HepG2 (cell line): ENCODE measurements at regions of chrX and their contacts with region 1.

Region 1: GRCh38 chrX:147476008-147476407 is 435.7 kb upstream of the FMR1 start:
- DNase-seq: peak; percentile 4
- ATAC-seq: peak; percentile 59; the same call in 2 of the 3 replicates
- H3K4me3 ChIP-seq: no peak overlapping the region
- H3K27ac ChIP-seq: no peak overlapping the region
- H3K4me1 ChIP-seq: no peaks in the 10 kb centered on the region
- H3K27me3 ChIP-seq: no peaks in the 10 kb centered on the region
- CTCF ChIP-seq: peak; percentile 51
- EP300 ChIP-seq: no peak
- POLR2A ChIP-seq: no peak
- RAD21 ChIP-seq: no peak

Region 2: DNA sequence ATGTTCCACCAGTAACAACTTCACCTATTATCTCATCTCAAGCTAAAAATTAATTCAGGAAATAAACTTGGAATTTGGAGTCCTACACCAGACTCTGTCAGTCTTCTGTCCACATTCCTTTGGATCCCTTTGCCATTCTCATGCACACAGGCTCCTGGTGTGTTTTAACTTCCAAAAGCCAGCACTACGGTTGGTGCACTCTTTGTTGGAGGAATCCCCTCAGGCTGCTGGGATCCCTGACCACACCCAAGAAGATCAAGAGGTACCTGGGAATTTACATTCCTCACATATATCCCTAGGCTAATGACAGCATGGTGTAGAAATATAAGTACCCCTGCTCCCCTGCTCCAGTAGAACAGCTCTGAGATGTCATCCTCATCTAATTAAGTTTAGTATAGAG is 31.7 kb before region 1 on chrX:
- CTCF ChIA-PET with region 1: no interaction called
- POLR2A ChIA-PET with region 1: no interaction called
- in situ Hi-C with region 1: no loop called
- intact Hi-C with region 1: no loop called
- DNase-seq: no peak
- ATAC-seq: no peak
- H3K4me3 ChIP-seq: no peak overlapping the region
- H3K27ac ChIP-seq: no peak overlapping the region
- H3K4me1 ChIP-seq: no peaks in the 10 kb centered on the region
- H3K27me3 ChIP-seq: no peaks in the 10 kb centered on the region
- CTCF ChIP-seq: no peak
- EP300 ChIP-seq: no peak
- POLR2A ChIP-seq: no peak
- RAD21 ChIP-seq: no peak

Region 3: DNA sequence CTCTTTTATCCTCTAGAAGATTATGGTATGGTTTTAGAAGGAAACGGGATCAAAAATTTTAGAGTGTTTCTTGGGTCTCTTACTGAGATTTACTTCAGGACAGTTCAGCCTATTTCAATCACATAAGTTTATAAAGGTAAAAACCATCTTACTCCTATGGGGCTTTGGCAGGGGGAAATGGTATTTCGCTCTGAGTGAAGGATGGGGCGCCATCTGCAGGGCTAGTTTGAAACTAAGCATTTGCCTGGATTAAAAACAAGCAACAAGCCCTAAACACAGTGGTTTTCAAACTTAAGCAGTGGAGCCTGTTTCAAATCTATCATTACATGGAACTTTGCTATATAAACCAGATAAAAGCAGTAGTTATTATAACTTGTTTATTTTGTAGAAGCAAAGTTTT is 74.2 kb after region 1 on chrX:
- CTCF ChIA-PET with region 1: no interaction called
- POLR2A ChIA-PET with region 1: no interaction called
- in situ Hi-C with region 1: no loop called
- intact Hi-C with region 1: loop called (anchors 5 kb)
- DNase-seq: peak; percentile 1
- ATAC-seq: no peak
- H3K4me3 ChIP-seq: no peak overlapping the region
- H3K27ac ChIP-seq: no peak overlapping the region
- H3K4me1 ChIP-seq: no peaks in the 10 kb centered on the region
- H3K27me3 ChIP-seq: no peaks in the 10 kb centered on the region
- CTCF ChIP-seq: peak; percentile 48
- EP300 ChIP-seq: no peak
- POLR2A ChIP-seq: no peak
- RAD21 ChIP-seq: no peak